CD4-positive, alpha-beta T cell (primary cell): ENCODE measurements at regions of chr19 and their contacts with region 1.

Region 1: GRCh38 chr19:14006243-14006765 is at the start of gene RFX1:
- DNase-seq: peak; percentile 99 to 100 (median 100)
- ATAC-seq: peak; percentile 74
- H3K4me3 ChIP-seq: peak within 1 kb of the TSS; percentile 80
- H3K4me3 Mint-ChIP-seq: peak within 1 kb of the TSS; percentile 91
- H3K27ac ChIP-seq: peak within 1 kb of the TSS; percentile 99
- H3K27ac Mint-ChIP-seq: peak within 1 kb of the TSS; percentile 91
- H3K4me1 ChIP-seq: peaks cover 51% of the 10 kb centered on the region
- H3K4me1 Mint-ChIP-seq: peaks cover 41% of the 10 kb centered on the region
- H3K27me3 ChIP-seq: no peaks in the 10 kb centered on the region
- H3K27me3 Mint-ChIP-seq: no peaks in the 10 kb centered on the region
- CTCF ChIP-seq: no peak
- total RNA-seq, gene RFX1: 14.6 to 16.3 TPM

Region 2: DNA sequence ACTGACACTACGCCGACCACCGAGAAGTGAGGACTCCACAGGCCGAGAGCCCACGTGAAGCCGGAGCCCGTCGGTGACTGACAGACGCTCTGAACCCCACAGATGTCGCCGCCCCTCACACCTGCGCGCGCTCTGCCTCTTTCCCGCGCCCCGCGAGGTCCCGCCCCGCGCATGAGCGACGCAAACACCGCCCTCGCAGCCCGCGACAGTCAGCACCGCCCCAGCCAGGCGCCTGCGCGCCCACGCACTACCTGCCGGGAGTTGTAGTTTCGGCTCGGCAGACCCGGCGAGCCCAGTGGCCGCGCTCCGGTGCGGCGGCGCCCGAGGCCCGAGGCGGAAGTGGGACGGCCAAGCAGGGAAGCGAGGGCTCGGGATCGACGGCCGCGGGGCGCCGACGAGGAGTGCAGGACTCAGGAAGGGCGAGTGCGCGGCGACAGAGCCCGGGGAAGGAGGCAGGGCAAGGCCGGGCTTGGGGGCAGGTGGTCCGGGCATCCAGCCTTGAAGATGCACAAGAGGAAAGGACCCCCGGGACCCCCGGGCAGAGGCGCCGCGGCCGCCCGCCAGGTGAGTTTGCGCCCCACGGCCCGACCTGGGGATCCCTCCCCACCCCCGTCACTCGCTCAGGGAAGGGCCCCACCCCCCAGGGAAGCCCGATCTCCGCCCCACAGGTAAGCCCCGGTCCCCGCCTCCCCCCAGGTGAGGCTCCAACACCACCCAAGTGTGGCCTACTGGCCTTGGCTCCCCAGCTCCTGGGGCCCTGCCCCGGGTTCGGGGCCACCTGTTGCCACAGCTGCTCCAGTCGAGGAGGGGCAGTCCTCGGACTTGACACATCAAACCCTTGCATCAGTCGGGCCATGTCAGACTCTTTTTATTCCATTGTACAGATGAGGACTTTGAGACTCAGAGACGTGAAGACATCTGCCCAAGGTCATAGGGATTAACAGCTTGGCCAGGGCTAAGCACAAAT is 100.1 kb before region 1 on chr19 and contains the starts of genes BRME1 and CC2D1A:
- CTCF ChIA-PET with region 1: no interaction called
- POLR2A ChIA-PET with region 1: interaction called, 5 read pairs
- intact Hi-C with region 1: loop called in 1 of 2 experiments (anchors 5 kb)
- DNase-seq: peak; percentile 88 to 96 (median 92)
- ATAC-seq: peak; percentile 99
- H3K4me3 ChIP-seq: peak within 1 kb of the TSS; percentile 77
- H3K4me3 Mint-ChIP-seq: peak within 1 kb of the TSS; percentile 92
- H3K27ac ChIP-seq: peak within 1 kb of the TSS in 1 of 2 donors; percentile 49
- H3K27ac Mint-ChIP-seq: peak within 1 kb of the TSS; percentile 66
- H3K4me1 ChIP-seq: peaks cover 24% of the 10 kb centered on the region
- H3K4me1 Mint-ChIP-seq: peaks cover 13% of the 10 kb centered on the region
- H3K27me3 ChIP-seq: no peaks in the 10 kb centered on the region
- H3K27me3 Mint-ChIP-seq: no peaks in the 10 kb centered on the region
- CTCF ChIP-seq: no peak
- total RNA-seq, gene BRME1: 1.1 to 1.3 TPM
- total RNA-seq, gene CC2D1A: 16.4 to 16.9 TPM

Region 3: GRCh38 chr19:13986348-13986904 is 19.9 kb before region 1 on chr19:
- CTCF ChIA-PET with region 1: interaction called, 6 read pairs
- POLR2A ChIA-PET with region 1: interaction called, 16 read pairs
- intact Hi-C with region 1: loop called (anchors 1 kb)
- DNase-seq: peak; percentile 95 to 100 (median 99)
- ATAC-seq: peak; percentile 87
- H3K4me3 ChIP-seq: peak overlapping the region; percentile 45
- H3K4me3 Mint-ChIP-seq: peak overlapping the region; percentile 83
- H3K27ac ChIP-seq: peak overlapping the region; percentile 97 to 99
- H3K27ac Mint-ChIP-seq: peak overlapping the region; percentile 97
- H3K4me1 ChIP-seq: peaks cover 93% of the 10 kb centered on the region
- H3K4me1 Mint-ChIP-seq: peaks cover 88% of the 10 kb centered on the region
- H3K27me3 ChIP-seq: no peaks in the 10 kb centered on the region
- H3K27me3 Mint-ChIP-seq: no peaks in the 10 kb centered on the region
- CTCF ChIP-seq: no peak

Region 4: DNA sequence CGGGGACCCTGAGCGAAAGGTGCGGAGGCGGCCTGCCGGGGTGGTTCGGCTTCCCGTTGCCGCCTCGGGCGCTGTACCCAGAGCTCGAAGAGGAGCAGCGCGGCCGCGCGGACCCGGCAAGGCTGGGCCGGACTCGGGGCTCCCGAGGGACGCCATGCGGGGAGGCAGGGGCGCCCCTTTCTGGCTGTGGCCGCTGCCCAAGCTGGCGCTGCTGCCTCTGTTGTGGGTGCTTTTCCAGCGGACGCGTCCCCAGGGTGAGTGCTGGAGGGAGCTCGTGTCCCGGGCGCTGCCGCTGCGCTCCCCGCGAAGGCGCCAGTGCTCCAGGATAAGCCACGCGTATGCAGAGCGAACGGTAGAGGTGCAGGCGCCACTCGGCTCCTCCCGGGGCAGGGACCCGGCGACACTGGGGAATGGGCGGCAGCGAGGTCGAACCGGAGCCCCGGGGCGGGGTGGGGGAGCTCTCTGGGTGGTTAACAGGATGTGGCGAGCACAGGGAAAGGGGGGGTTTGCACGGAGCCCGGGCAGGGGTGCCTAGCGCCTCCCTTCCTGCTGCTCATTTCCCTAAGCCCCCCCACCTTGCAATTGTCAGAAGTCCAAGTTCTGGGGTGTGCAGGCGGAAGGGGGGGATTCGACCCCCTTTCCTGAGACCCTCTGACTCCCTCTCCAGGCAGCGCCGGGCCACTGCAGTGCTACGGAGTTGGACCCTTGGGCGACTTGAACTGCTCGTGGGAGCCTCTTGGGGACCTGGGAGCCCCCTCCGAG is 25.6 kb after region 1 on chr19 and contains the start of gene IL27RA:
- CTCF ChIA-PET with region 1: interaction called, 5 read pairs
- POLR2A ChIA-PET with region 1: interaction called, 117 read pairs
- intact Hi-C with region 1: loop called (anchors 1 to 2 kb)
- DNase-seq: peak; percentile 67 to 94 (median 83)
- ATAC-seq: peak; percentile 82
- H3K4me3 ChIP-seq: peak within 1 kb of the TSS; percentile 86
- H3K4me3 Mint-ChIP-seq: peak within 1 kb of the TSS; percentile 98
- H3K27ac ChIP-seq: peak within 1 kb of the TSS; percentile 93 to 98
- H3K27ac Mint-ChIP-seq: peak within 1 kb of the TSS; percentile 94
- H3K4me1 ChIP-seq: peaks cover 49% of the 10 kb centered on the region
- H3K4me1 Mint-ChIP-seq: peaks cover 36% of the 10 kb centered on the region
- H3K27me3 ChIP-seq: no peaks in the 10 kb centered on the region
- H3K27me3 Mint-ChIP-seq: no peaks in the 10 kb centered on the region
- CTCF ChIP-seq: no peak
- total RNA-seq, gene IL27RA: 25.0 to 26.7 TPM

Region 5: DNA sequence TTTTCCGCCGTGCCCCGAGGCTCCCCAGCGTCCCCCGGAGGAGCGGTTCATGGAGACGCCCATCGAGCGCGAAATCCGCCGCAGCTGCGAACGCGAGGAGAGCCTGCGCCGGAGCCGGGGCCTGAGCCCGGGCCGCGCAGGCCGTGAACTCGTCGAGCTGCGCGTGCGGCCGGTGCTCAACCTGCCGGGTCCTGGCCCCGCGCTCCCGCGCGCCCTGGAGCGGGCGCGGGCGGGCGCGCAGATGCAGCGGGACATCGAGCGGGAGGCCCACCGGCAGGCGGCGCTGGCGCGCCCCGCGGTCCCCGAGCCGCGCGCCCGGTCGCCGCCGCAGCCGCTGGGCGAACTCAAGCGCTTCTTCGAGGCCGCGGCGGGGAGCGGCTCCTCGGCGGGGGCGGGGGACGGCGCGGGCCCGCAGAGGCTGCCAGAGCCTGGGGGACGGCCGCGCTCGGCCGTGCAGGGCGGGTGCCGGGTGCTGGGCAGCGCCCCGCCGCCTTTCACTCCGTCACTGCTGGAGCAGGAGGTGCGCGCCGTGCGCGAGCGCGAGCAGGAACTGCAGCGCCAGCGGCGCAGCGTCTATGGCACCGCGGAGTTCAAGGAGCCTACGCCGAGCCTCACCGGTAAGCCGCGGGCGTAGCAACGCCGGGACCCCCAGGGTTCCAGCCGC is 67.1 kb after region 1 on chr19:
- CTCF ChIA-PET with region 1: no interaction called
- POLR2A ChIA-PET with region 1: no interaction called
- intact Hi-C with region 1: loop called in 1 of 2 experiments (anchors 5 kb)
- DNase-seq: peak; percentile 55 to 92 (median 72)
- ATAC-seq: peak; percentile 79
- H3K4me3 ChIP-seq: peak overlapping the region; percentile 77
- H3K4me3 Mint-ChIP-seq: peak overlapping the region; percentile 93
- H3K27ac ChIP-seq: no peak overlapping the region
- H3K27ac Mint-ChIP-seq: peak overlapping the region; percentile 83
- H3K4me1 ChIP-seq: peaks cover 38% of the 10 kb centered on the region
- H3K4me1 Mint-ChIP-seq: peaks cover 17% of the 10 kb centered on the region
- H3K27me3 ChIP-seq: peaks cover 4 to 5% of the 10 kb centered on the region in 2 experiments
- H3K27me3 Mint-ChIP-seq: peaks cover 4% of the 10 kb centered on the region
- CTCF ChIP-seq: no peak